Heart right ventricle (tissue), 16 donors: ENCODE measurements at regions of chr3 and their contacts with region 1.

Region 1: GRCh38 chr3:94716326-94717010 is 653.6 kb downstream of the NSUN3 start:
- DNase-seq: no peak
- ATAC-seq: no peak
- H3K4me3 ChIP-seq: no peak overlapping the region
- H3K27ac ChIP-seq: no peak overlapping the region
- H3K4me1 ChIP-seq: no peaks in the 10 kb centered on the region
- H3K27me3 ChIP-seq: no peaks in the 10 kb centered on the region
- CTCF ChIP-seq: peak in 6 of 9 donors; percentile 14 to 26 (median 18)

Region 2: GRCh38 chr3:94336046-94336710 is 380.3 kb before region 1 on chr3:
- intact Hi-C with region 1: loop called in 4 of 10 experiments (anchors 5 to 10 kb)
- DNase-seq: no peak
- ATAC-seq: peak in 2 of 8 donors; percentile 70 to 73
- H3K4me3 ChIP-seq: no peak overlapping the region
- H3K27ac ChIP-seq: no peak overlapping the region
- H3K4me1 ChIP-seq: no peaks in the 10 kb centered on the region
- H3K27me3 ChIP-seq: no peaks in the 10 kb centered on the region
- CTCF ChIP-seq: peak in 8 of 9 donors; percentile 5 to 62 (median 46)

Region 3: GRCh38 chr3:94904156-94904674 is 187.7 kb after region 1 on chr3:
- intact Hi-C with region 1: no loop called
- DNase-seq: no peak
- ATAC-seq: peak in 2 of 8 donors; percentile 14 to 30
- H3K4me3 ChIP-seq: no peak overlapping the region
- H3K27ac ChIP-seq: no peak overlapping the region
- H3K4me1 ChIP-seq: no peaks in the 10 kb centered on the region
- H3K27me3 ChIP-seq: no peaks in the 10 kb centered on the region
- CTCF ChIP-seq: no peak